ENCODE measurements at regions of chr12 and their contacts with region 1.

Region 1: GRCh38 chr12:3604748-3605586 is 114.0 kb downstream of the PRMT8 start:
- DNase-seq: no peak
- H3K4me3 ChIP-seq: no peak overlapping the region
- CTCF ChIP-seq: no peak

Region 2: DNA sequence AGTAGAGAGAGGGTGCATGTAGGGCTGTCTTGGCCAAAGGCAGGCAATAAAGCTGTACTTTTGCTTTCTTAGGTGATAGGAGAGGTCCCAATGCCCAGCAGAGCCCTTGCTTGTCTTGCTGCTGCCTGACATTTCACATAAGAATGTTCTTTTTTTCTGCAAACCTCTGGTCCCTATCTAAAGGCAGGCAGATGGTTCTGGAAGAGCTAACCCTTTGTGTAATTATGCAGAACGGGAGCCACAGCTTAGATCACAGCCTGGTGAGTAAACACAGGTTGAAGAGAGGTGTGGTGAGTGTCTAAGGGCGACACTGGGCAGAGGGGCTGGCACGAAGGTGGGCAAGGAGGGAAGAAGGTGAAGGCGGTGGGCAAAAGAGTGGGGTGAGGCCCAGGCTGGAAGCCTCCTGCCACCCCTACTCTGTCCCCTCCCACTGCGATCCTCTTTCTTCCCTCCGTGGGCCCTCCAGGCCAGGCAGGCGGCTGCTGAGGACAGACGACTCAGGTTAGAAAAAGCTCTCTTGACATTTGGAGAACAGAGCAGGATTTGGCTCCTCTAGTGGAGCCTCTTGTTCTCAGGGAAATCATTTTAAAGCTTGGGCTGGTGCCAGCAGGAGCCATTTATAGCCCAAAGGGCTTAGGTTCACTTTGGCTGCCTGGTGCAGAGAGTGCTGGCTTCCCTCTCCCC is 71.1 kb before region 1 on chr12:
- in situ Hi-C with region 1: loop called (anchors 5 kb)
- DNase-seq: no peak
- H3K4me3 ChIP-seq: no peak overlapping the region
- CTCF ChIP-seq: no peak

Region 3: DNA sequence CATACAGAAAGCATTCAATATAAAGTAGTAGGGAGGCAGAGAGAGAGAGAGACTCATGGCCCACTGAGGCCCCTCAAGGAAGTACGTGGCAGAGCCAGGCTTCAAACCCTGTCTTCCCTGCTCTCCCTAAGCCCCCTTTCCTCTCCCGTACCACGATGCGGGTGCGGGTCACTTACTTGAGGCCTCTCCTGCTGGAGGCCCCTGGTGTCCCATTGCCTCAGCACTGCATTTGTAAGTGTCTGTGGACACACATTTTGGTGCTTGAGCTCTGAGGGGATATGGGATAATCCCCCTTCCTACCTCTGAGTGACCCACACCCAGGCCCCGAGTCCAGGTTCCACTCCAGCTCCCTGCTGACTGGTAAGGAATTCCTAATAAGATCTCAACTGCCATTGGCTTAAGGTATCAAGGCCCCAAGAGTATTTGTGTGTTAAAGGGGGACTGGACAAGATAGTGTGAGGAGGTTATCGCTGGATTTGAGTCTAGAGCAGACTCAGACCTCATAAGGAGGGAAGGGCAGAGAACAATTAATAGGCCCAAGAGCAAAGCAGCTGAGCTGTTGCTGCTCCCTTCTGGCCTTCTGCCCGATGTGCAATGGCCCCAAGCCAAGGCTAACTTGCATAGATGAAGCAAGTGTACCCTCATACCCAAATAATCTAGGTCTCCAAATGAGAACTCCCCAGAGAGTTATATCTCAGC is 76.1 kb after region 1 on chr12:
- in situ Hi-C with region 1: loop called (anchors 10 kb)
- DNase-seq: no peak
- H3K4me3 ChIP-seq: no peak overlapping the region
- CTCF ChIP-seq: no peak